ENCODE measurements at regions of chr5 and their contacts with region 1.

Region 1: GRCh38 chr5:6820851-6821479 is 107.7 kb downstream of the TENT4A start:
- DNase-seq: peak; percentile 59 to 86
- H3K4me3 ChIP-seq: no peak overlapping the region
- H3K27ac ChIP-seq: no peak overlapping the region
- H3K4me1 ChIP-seq: no peaks in the 10 kb centered on the region; a peak in 1 of 7 replicates
- H3K27me3 ChIP-seq: no peaks in the 10 kb centered on the region
- CTCF ChIP-seq: peak; percentile 74 to 99 (median 93)
- EP300 ChIP-seq: no peak
- POLR2A ChIP-seq: no peak
- RAD21 ChIP-seq: peak; percentile 97 to 99

Region 2: GRCh38 chr5:6686915-6687409 is 134.0 kb before region 1 on chr5:
- CTCF ChIA-PET with region 1: no interaction called
- POLR2A ChIA-PET with region 1: no interaction called
- DNase-seq: no peak
- H3K4me3 ChIP-seq: peak overlapping the region; percentile 48 to 63 (median 60); a peak in 7 of 8 replicates
- H3K27ac ChIP-seq: no peak overlapping the region
- H3K4me1 ChIP-seq: no peaks in the 10 kb centered on the region
- H3K27me3 ChIP-seq: peaks cover 0 to 4% (median 2%) of the 10 kb centered on the region in 4 experiments; a peak in 4 of 7 replicates
- CTCF ChIP-seq: no peak
- EP300 ChIP-seq: no peak
- POLR2A ChIP-seq: no peak
- RAD21 ChIP-seq: no peak

Region 3: DNA sequence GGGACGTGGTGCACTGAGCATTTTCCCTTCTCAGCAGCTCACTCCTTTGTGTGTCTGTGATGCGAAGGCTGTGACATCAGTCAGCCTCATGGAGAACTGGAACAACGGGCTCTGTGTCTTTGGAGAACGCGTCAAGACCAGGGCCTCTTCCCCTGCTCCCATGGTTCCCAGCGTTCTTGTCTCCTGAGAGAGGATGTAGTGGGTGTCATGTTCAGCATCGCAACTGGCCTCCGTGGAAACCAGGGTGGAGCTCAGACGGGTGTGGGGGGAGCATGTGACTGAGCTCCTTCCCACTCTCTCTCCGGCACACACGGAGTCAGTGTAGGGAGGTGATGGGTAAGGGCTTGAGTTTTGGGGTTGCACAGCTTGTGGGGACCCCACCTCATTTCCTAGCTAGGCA is 48.1 kb before region 1 on chr5:
- CTCF ChIA-PET with region 1: interaction called, 97 read pairs
- POLR2A ChIA-PET with region 1: no interaction called
- DNase-seq: no peak
- H3K4me3 ChIP-seq: no peak overlapping the region
- H3K27ac ChIP-seq: no peak overlapping the region
- H3K4me1 ChIP-seq: no peaks in the 10 kb centered on the region
- H3K27me3 ChIP-seq: no peaks in the 10 kb centered on the region
- CTCF ChIP-seq: no peak
- EP300 ChIP-seq: no peak
- POLR2A ChIP-seq: no peak
- RAD21 ChIP-seq: no peak

Region 4: GRCh38 chr5:6804766-6805501 is 16.0 kb before region 1 on chr5:
- CTCF ChIA-PET with region 1: interaction called, 20 read pairs
- POLR2A ChIA-PET with region 1: no interaction called
- DNase-seq: no peak
- H3K4me3 ChIP-seq: no peak overlapping the region
- H3K27ac ChIP-seq: no peak overlapping the region
- H3K4me1 ChIP-seq: no peaks in the 10 kb centered on the region
- H3K27me3 ChIP-seq: no peaks in the 10 kb centered on the region
- CTCF ChIP-seq: no peak
- EP300 ChIP-seq: no peak
- POLR2A ChIP-seq: no peak
- RAD21 ChIP-seq: no peak

Region 5: GRCh38 chr5:6849316-6850105 is 28.5 kb after region 1 on chr5:
- CTCF ChIA-PET with region 1: interaction called, 13 read pairs
- POLR2A ChIA-PET with region 1: no interaction called
- DNase-seq: no peak
- H3K4me3 ChIP-seq: no peak overlapping the region
- H3K27ac ChIP-seq: no peak overlapping the region
- H3K4me1 ChIP-seq: no peaks in the 10 kb centered on the region
- H3K27me3 ChIP-seq: no peaks in the 10 kb centered on the region
- CTCF ChIP-seq: no peak
- EP300 ChIP-seq: no peak
- POLR2A ChIP-seq: no peak
- RAD21 ChIP-seq: no peak

Region 6: DNA sequence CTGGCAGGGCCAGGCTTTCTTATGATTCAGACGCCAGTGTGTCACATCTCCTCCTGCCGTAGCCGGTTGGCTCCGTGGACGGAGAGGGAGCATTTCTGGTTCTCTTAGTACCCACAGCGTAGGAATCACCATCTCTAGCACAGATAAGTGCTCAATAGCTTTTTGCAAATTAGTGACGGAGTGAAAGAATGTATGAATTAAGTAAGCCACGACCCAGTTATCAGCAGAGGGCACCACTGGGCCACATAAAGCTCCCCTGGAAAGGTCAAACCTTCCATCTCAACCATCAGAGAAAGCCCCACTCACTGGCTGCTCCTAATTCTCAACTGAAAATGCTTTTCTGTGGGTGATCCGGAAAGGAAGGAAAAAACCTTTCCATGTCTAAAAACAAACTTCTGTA is 257.9 kb after region 1 on chr5:
- CTCF ChIA-PET with region 1: interaction called, 44 read pairs
- POLR2A ChIA-PET with region 1: no interaction called
- DNase-seq: peak; percentile 31 to 61
- H3K4me3 ChIP-seq: no peak overlapping the region
- H3K27ac ChIP-seq: no peak overlapping the region
- H3K4me1 ChIP-seq: peaks cover 0 to 10% (median 7%) of the 10 kb centered on the region in 4 experiments; a peak in 5 of 7 replicates
- H3K27me3 ChIP-seq: no peaks in the 10 kb centered on the region
- CTCF ChIP-seq: peak; percentile 40 to 72 (median 61)
- EP300 ChIP-seq: no peak
- POLR2A ChIP-seq: no peak
- RAD21 ChIP-seq: peak; percentile 76 to 85

Region 7: DNA sequence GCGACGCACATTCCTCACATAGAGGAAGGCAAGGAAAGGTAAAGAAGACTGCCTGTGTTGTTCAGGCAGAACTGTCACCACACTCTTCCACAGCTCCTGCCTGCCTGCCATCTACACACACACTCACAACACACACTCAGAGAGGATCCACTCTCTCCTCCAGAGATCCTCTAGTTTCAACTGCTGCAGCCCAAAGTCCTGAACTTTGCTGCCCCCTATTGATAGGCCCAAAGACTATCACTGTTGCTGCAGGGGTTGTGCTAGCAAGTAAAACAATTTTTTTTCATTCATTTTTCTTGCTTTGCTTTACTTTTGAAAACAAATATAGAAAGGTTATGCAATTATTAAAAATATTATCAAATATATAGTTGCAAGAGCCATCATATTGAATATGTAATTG is 1035.9 kb after region 1 on chr5:
- CTCF ChIA-PET with region 1: interaction called, 35 read pairs
- POLR2A ChIA-PET with region 1: no interaction called
- DNase-seq: peak in 1 of 2 experiments; percentile 56
- H3K4me3 ChIP-seq: no peak overlapping the region
- H3K27ac ChIP-seq: no peak overlapping the region
- H3K4me1 ChIP-seq: no peaks in the 10 kb centered on the region
- H3K27me3 ChIP-seq: peaks cover 0 to under 1% (median 0%) of the 10 kb centered on the region in 4 experiments; a peak in 1 of 7 replicates
- CTCF ChIP-seq: peak; percentile 48 to 86 (median 86)
- EP300 ChIP-seq: no peak
- POLR2A ChIP-seq: no peak
- RAD21 ChIP-seq: peak; percentile 94 to 95